Calu3 (cell line): ENCODE measurements at regions of chr15 and their contacts with region 1.

Region 1: GRCh38 chr15:81265944-81266775 is 57.8 kb downstream of the STARD5 start:
- DNase-seq: peak; percentile 89
- H3K4me3 Mint-ChIP-seq: peak overlapping the region; percentile 36
- H3K27ac Mint-ChIP-seq: no peak overlapping the region
- H3K4me1 Mint-ChIP-seq: peaks cover 14% of the 10 kb centered on the region
- H3K27me3 Mint-ChIP-seq: peaks cover 73% of the 10 kb centered on the region
- CTCF ChIP-seq: peak; percentile 92

Region 2: GRCh38 chr15:81000624-81001151 is 265.5 kb before region 1 on chr15 and contains the start of gene TLNRD1:
- CTCF ChIA-PET with region 1: interaction called, 6 read pairs
- intact Hi-C with region 1: loop called (anchors 5 kb)
- DNase-seq: peak; percentile 96
- H3K4me3 Mint-ChIP-seq: peak within 1 kb of the TSS; percentile 93
- H3K27ac Mint-ChIP-seq: peak within 1 kb of the TSS; percentile 98
- H3K4me1 Mint-ChIP-seq: peaks cover 27% of the 10 kb centered on the region
- H3K27me3 Mint-ChIP-seq: no peaks in the 10 kb centered on the region
- CTCF ChIP-seq: no peak
- total RNA-seq, gene TLNRD1: 31.8 and 33.4 TPM in 2 replicates

Region 3: GRCh38 chr15:81111510-81112470 is 154.4 kb before region 1 on chr15:
- CTCF ChIA-PET with region 1: interaction called, 85 read pairs
- intact Hi-C with region 1: loop called (anchors 1 kb)
- DNase-seq: no peak
- H3K4me3 Mint-ChIP-seq: no peak overlapping the region
- H3K27ac Mint-ChIP-seq: no peak overlapping the region
- H3K4me1 Mint-ChIP-seq: peaks cover 16% of the 10 kb centered on the region
- H3K27me3 Mint-ChIP-seq: peaks cover 36% of the 10 kb centered on the region
- CTCF ChIP-seq: no peak

Region 4: GRCh38 chr15:81163961-81164800 is 102.0 kb before region 1 on chr15:
- CTCF ChIA-PET with region 1: interaction called, 14 read pairs
- intact Hi-C with region 1: no loop called
- DNase-seq: peak; percentile 20
- H3K4me3 Mint-ChIP-seq: no peak overlapping the region
- H3K27ac Mint-ChIP-seq: no peak overlapping the region
- H3K4me1 Mint-ChIP-seq: no peaks in the 10 kb centered on the region
- H3K27me3 Mint-ChIP-seq: peaks cover 29% of the 10 kb centered on the region
- CTCF ChIP-seq: no peak